BJ (cell line): ENCODE measurements at regions of chr2 and their contacts with region 1.

Region 1: GRCh38 chr2:191945623-191946022 is 98.7 kb upstream of the CAVIN2 start:
- DNase-seq: no peak
- H3K4me3 ChIP-seq: no peak overlapping the region
- H3K27me3 ChIP-seq: no peaks in the 10 kb centered on the region
- CTCF ChIP-seq: no peak

Region 2: DNA sequence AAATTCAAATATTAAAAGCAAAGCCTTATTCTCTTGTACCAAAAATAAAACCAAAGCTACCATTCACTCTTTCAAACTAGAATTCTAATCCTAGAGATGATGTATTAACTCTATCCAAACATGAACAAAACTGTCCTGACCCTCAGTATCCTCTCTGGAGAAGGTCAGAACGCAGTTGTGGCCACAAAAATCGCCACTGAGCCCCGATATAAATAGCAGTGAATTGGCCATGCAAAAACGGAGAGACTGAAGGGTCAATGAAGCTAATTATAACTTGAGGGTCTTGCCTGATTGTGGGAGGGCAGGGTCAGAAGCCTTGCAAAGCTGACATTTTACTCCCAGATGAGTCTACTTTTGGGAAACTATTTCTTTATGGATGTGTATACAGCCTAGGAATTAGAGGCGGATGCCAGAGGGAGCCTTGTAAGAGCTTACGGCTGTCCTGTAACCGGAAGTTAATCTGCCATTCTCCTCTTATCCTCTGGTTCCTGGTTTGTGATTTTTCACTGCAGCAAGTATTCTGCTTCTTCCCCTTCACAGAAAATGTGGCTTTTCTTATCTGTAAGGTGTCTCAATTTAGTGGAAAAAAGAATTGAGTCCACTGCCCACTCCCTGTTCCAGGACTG is 126.8 kb before region 1 on chr2:
- CTCF ChIA-PET with region 1: no interaction called
- POLR2A ChIA-PET with region 1: interaction called, 10 read pairs
- DNase-seq: no peak
- H3K4me3 ChIP-seq: no peak overlapping the region
- H3K27me3 ChIP-seq: no peaks in the 10 kb centered on the region
- CTCF ChIP-seq: no peak